ENCODE measurements at regions of chr22 and their contacts with region 1.

Region 1: DNA sequence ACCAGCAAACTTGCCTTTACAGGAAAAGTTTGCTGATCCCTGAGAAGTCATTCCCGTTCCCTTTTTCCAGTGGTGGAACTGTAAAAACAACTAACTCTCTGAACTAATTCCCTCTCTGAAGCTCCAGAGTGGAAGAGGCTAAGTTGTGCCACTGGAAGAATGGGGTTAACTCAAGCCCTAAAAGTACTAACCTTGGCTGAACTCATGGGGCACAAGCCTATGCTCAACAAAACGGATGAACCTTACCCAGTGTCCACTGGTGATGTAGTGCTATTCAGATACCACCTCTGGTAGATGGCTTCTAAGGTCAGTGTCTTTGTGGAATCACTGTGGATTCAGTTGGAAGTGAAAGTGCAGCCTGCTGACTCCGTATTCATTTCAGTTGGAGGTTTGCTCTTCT is 59.9 kb upstream of the GNAZ start:
- DNase-seq: no peak
- ATAC-seq: no peak
- H3K4me3 ChIP-seq: no peak overlapping the region
- H3K27ac ChIP-seq: no peak overlapping the region
- H3K4me1 ChIP-seq: no peaks in the 10 kb centered on the region
- H3K27me3 ChIP-seq: no peaks in the 10 kb centered on the region
- CTCF ChIP-seq: no peak

Region 2: DNA sequence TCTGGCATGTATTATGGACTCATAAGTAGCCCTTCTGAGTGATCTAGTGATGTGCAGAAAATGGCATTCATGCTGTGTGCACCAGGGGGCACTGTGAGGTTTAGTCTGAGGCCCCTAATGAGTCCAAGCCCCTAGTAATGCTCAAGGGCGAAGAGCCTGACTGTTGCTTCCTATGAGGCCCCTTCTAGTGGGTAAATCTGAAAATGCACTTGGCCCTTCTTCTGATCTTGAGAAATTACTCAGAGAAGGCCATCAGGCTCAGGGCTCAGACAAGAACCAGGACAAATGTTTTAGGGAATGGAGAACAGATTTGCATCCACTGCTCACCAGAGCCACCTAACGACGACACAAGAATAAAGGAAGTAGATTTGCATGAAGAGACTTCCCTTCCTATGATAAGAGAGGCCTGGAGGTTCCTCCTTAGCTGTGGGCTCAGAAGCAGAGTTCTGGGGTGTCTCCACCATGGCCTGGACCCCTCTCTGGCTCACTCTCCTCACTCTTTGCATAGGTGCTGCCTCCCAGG is 290.2 kb before region 1 on chr22:
- CTCF ChIA-PET with region 1: no interaction called
- POLR2A ChIA-PET with region 1: no interaction called
- in situ Hi-C with region 1: no loop called
- intact Hi-C with region 1: no loop called
- DNase-seq: peak; percentile 18
- ATAC-seq: peak; percentile 89
- H3K4me3 ChIP-seq: no peak overlapping the region
- H3K27ac ChIP-seq: no peak overlapping the region
- H3K4me1 ChIP-seq: no peaks in the 10 kb centered on the region
- H3K27me3 ChIP-seq: peaks cover 2% of the 10 kb centered on the region; the same call in 1 of the 2 replicates
- CTCF ChIP-seq: peak; percentile 78

Region 3: DNA sequence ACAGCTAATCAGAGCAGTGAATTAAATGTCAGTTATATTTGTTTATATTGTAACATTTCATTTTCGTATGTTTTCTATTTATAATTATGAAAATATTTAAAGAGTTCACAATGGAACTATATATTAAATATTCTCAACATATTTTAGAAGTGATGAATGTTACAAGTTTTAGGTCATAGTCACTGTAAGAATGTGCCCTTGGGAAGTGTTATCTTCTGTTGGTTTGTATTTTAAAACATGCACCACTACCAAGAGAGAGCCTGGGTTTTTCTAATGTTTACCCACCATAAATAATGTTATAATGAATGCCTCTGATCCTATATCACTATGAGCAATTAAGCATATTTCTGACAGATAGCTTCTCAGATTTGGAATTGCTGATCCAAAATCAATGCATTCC is 340.9 kb after region 1 on chr22:
- CTCF ChIA-PET with region 1: interaction called, 10 read pairs
- POLR2A ChIA-PET with region 1: no interaction called
- in situ Hi-C with region 1: no loop called
- intact Hi-C with region 1: no loop called
- DNase-seq: no peak
- ATAC-seq: no peak
- H3K4me3 ChIP-seq: no peak overlapping the region
- H3K27ac ChIP-seq: no peak overlapping the region
- H3K4me1 ChIP-seq: no peaks in the 10 kb centered on the region
- H3K27me3 ChIP-seq: no peaks in the 10 kb centered on the region; the same call in 1 of the 2 replicates
- CTCF ChIP-seq: no peak